ENCODE measurements at regions of chr22 and their contacts with region 1.

Region 1: DNA sequence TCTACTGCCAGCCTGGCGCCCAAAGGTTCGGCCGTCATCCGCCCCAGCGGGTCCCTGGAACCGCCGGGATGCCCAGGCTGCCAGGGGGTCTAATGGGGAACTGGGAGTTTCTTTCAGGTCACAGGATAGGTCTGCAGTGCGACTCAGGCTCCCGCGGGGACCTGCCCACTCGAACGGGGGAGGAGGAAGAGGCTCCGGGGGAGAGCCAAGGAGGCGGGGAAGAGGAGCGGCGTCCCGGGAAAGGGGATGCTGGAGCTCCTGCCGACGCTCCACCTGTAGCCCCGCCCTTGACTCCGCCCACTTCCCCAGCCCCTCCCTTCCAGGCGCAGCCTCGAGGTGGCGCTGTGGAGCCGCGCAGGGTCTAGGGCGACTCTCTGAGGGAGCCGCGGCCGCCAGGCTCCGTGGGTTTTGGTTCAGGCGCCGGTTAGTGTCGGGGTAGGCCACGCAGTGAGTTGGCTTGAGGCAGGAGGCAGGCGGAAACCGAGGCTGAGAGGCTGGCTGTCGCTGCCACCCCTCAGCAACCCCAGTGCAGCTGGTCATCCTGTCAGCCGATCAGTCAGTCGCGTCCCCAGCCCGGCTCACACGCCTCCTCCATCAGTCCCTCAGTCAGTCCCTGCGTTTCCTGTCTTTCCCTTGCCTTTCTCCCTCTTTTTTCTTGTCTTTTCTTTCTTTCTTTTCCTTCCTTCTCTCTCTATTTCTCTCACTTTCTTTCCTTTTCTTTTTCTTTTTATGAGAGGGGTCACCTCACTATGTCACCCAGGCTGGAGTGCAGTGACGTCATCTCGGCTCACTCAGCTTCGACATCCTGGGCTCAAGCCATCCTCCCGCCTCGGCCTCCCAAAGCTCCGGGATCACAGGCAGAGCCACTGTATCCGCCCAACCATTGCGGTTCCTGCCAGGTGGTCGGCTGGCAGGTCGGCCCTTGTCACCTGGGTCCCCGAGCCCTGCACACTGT is 26.4 kb downstream of the YWHAH start:
- DNase-seq: peak; percentile 97
- H3K4me3 ChIP-seq: peak overlapping the region; percentile 53 to 70
- H3K27ac ChIP-seq: no peak overlapping the region
- H3K4me1 ChIP-seq: peaks cover 0 to 2% of the 10 kb centered on the region in 2 experiments; a peak in 1 of 4 replicates
- H3K27me3 ChIP-seq: no peaks in the 10 kb centered on the region
- CTCF ChIP-seq: peak; percentile 75
- EP300 ChIP-seq: no peak
- RAD21 ChIP-seq: peak; percentile 72

Region 2: GRCh38 chr22:31394326-31394725 is 576.4 kb before region 1 on chr22:
- CTCF ChIA-PET with region 1: no interaction called
- POLR2A ChIA-PET with region 1: no interaction called
- DNase-seq: no peak
- H3K4me3 ChIP-seq: no peak overlapping the region
- H3K27ac ChIP-seq: peak overlapping the region in 1 of 2 experiments; percentile 55; a peak in 1 of 4 replicates
- H3K4me1 ChIP-seq: no peaks in the 10 kb centered on the region
- H3K27me3 ChIP-seq: no peaks in the 10 kb centered on the region
- CTCF ChIP-seq: no peak
- EP300 ChIP-seq: no peak
- RAD21 ChIP-seq: no peak

Region 3: GRCh38 chr22:31637938-31638618 is 332.7 kb before region 1 on chr22:
- CTCF ChIA-PET with region 1: no interaction called
- POLR2A ChIA-PET with region 1: no interaction called
- DNase-seq: no peak
- H3K4me3 ChIP-seq: no peak overlapping the region
- H3K27ac ChIP-seq: no peak overlapping the region
- H3K4me1 ChIP-seq: no peaks in the 10 kb centered on the region; a peak in 1 of 4 replicates
- H3K27me3 ChIP-seq: no peaks in the 10 kb centered on the region
- CTCF ChIP-seq: no peak
- EP300 ChIP-seq: no peak
- RAD21 ChIP-seq: no peak

Region 4: GRCh38 chr22:31676700-31677099 is 294.1 kb before region 1 on chr22:
- CTCF ChIA-PET with region 1: interaction called, 12 read pairs
- POLR2A ChIA-PET with region 1: no interaction called
- DNase-seq: peak; percentile 94
- H3K4me3 ChIP-seq: peak overlapping the region; percentile 47 to 49
- H3K27ac ChIP-seq: peak overlapping the region in 1 of 2 experiments; percentile 29; a peak in 1 of 4 replicates
- H3K4me1 ChIP-seq: peaks cover 2 to 13% of the 10 kb centered on the region in 2 experiments; a peak in 3 of 4 replicates
- H3K27me3 ChIP-seq: no peaks in the 10 kb centered on the region
- CTCF ChIP-seq: no peak
- EP300 ChIP-seq: no peak
- RAD21 ChIP-seq: no peak

Region 5: GRCh38 chr22:31802575-31802974 is 168.2 kb before region 1 on chr22:
- CTCF ChIA-PET with region 1: no interaction called
- POLR2A ChIA-PET with region 1: no interaction called
- DNase-seq: no peak
- H3K4me3 ChIP-seq: no peak overlapping the region
- H3K27ac ChIP-seq: no peak overlapping the region
- H3K4me1 ChIP-seq: no peaks in the 10 kb centered on the region
- H3K27me3 ChIP-seq: no peaks in the 10 kb centered on the region
- CTCF ChIP-seq: no peak
- EP300 ChIP-seq: no peak
- RAD21 ChIP-seq: no peak

Region 6: DNA sequence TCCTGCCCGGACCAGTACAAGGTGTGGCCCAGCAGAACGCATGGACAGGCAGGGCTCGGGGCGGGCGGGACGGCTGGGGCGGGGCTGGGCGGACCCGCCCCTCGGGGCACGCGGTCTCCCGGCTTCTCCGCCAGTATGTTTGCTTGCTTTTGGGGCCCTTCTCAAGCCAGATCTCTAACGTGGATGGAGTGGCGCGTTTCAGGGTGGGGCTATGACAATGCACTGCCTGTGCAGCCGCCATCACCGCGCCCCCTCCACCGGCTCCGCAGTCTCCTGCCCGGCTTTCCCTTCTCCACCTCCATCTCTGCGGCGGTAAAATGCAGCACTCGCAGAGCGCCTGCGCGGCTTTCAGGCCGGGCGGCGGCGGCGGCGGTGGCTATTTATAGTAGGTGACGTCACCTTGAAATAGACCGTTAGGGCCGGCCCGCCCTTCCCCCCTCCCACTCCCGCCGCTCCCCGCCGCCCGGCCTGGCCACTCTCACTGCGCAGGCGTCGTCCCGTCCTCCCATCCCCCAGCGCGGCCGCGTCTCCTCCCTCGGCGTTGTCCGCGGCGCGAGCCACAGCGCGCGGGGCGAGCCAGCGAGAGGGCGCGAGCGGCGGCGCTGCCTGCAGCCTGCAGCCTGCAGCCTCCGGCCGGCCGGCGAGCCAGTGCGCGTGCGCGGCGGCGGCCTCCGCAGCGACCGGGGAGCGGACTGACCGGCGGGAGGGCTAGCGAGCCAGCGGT is 26.6 kb before region 1 on chr22 and contains the start of gene YWHAH:
- CTCF ChIA-PET with region 1: interaction called, 17 read pairs
- POLR2A ChIA-PET with region 1: no interaction called
- DNase-seq: peak; percentile 99
- H3K4me3 ChIP-seq: peak within 1 kb of the TSS; percentile 89 to 98
- H3K27ac ChIP-seq: peak within 1 kb of the TSS; percentile 80 to 96
- H3K4me1 ChIP-seq: peaks cover 0 to 22% of the 10 kb centered on the region in 2 experiments; a peak in 3 of 4 replicates
- H3K27me3 ChIP-seq: no peaks in the 10 kb centered on the region
- CTCF ChIP-seq: no peak
- EP300 ChIP-seq: peak in 1 of 2 experiments; percentile 41; a peak in 1 of 4 replicates
- RAD21 ChIP-seq: no peak
- polyA plus RNA-seq, gene YWHAH: 87.4 and 102 TPM in 2 replicates

Region 7: GRCh38 chr22:31983911-31984656 is 13.3 kb after region 1 on chr22:
- CTCF ChIA-PET with region 1: interaction called, 15 read pairs
- POLR2A ChIA-PET with region 1: no interaction called
- DNase-seq: no peak
- H3K4me3 ChIP-seq: no peak overlapping the region
- H3K27ac ChIP-seq: no peak overlapping the region
- H3K4me1 ChIP-seq: no peaks in the 10 kb centered on the region
- H3K27me3 ChIP-seq: no peaks in the 10 kb centered on the region
- CTCF ChIP-seq: no peak
- EP300 ChIP-seq: no peak
- RAD21 ChIP-seq: no peak

Region 8: DNA sequence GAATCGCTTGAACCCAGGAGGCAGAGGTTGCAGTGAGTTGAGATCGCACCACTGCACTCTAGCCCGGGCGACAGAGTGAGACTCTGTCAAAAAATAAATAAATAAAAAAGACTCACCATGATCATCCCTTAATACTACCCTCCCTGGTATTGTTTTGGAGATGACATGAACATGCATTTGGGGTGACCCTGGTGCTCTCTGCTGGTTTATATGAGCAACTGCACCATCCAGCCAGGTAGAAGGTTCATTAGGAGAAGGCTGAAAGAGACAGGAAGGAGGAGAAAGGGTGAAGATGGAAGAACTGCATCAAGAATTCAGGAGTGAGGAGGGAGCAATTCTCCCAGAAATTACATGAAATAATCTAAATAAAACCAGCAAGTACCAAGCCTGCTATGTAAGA is 110.1 kb after region 1 on chr22:
- CTCF ChIA-PET with region 1: interaction called, 211 read pairs
- POLR2A ChIA-PET with region 1: no interaction called
- DNase-seq: peak; percentile 73
- H3K4me3 ChIP-seq: no peak overlapping the region; a peak in 1 of 4 replicates
- H3K27ac ChIP-seq: no peak overlapping the region
- H3K4me1 ChIP-seq: no peaks in the 10 kb centered on the region
- H3K27me3 ChIP-seq: peaks cover 6% of the 10 kb centered on the region; the same call in 1 of the 2 replicates
- CTCF ChIP-seq: peak; percentile 76
- EP300 ChIP-seq: no peak
- RAD21 ChIP-seq: peak; percentile 89